ENCODE measurements at regions of chr16 and their contacts with region 1.

Region 1: DNA sequence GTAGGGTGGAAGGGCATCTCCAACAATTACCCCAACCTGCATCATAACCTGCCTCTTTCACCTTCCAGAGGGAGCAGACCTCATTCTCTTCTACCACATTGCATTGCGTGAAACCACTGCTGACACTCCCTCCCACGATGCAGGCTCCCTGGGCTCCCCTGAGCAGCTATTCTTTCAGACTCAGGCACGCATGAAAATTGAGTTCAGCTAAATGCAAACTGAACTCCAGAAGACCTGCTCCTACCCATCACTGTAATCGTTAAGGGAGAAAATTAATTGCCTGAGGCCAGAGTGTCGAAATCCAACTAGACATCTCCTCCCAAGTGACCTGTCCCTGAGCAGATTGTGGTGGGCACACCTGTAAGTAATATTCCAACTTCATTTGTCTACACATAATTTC is 186.0 kb downstream of the GRIN2A start:
- DNase-seq: no peak
- H3K4me3 ChIP-seq: no peak overlapping the region
- H3K27ac ChIP-seq: no peak overlapping the region
- H3K4me1 ChIP-seq: no peaks in the 10 kb centered on the region
- H3K27me3 ChIP-seq: no peaks in the 10 kb centered on the region
- CTCF ChIP-seq: no peak
- POLR2A ChIP-seq: no peak

Region 2: DNA sequence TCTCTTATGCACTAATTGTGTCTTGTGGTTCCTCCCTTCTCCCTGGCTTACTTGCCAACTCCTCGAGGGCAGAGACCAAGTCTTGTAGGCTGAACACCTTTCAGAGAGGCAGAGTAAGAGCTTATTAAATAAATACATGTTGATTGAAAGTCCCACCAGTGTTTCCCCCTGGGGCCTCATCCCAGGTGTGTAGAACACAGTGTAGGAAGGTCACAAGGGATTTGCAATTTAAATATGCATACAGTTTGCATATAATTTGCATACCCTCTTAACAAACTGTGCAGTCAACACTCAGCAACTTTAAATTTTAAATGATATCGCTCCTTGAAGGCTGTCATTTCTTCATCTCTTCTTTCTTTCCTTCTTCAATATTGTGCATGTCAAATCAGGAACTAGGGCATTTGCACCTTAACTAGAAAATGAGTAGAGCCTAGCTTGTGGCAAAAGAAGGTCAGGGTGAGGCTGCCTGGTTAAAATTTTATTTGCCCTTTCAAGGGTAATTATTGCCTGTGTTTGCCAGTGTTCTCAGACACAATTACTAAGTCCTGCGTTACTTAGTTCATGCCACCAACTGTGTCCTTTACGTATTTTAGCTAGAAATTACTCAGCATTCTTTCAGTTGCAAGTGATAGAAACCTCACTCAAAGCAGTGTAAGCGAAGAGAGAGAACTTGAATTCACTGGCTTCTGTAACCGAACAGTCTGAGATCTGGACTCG is 439.1 kb before region 1 on chr16:
- intact Hi-C with region 1: no loop called
- DNase-seq: no peak
- H3K4me3 ChIP-seq: no peak overlapping the region
- H3K27ac ChIP-seq: no peak overlapping the region
- H3K4me1 ChIP-seq: no peaks in the 10 kb centered on the region
- H3K27me3 ChIP-seq: no peaks in the 10 kb centered on the region
- CTCF ChIP-seq: no peak
- POLR2A ChIP-seq: no peak

Region 3: DNA sequence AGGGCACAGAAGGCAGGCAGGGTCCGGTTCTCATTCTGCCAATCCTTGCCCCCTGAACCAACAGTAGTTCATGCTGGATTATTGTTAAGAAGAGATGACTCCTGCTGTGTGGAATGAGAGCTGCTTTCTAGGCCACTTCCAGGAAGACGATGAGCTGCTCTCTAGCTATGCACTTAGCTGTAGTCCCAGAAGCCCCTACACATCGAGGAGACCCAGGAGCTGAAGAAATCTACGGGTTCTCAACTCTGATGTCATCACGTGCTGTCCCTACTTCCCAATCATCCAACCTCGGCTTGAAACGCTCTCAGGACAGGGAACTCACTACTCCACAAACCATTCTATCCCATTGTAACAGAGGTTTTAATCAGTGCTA is 613.2 kb after region 1 on chr16:
- intact Hi-C with region 1: loop called (anchors 5 kb)
- DNase-seq: no peak
- H3K4me3 ChIP-seq: no peak overlapping the region
- H3K27ac ChIP-seq: peak overlapping the region in 1 of 2 donors; percentile 32
- H3K4me1 ChIP-seq: no peaks in the 10 kb centered on the region
- H3K27me3 ChIP-seq: no peaks in the 10 kb centered on the region
- CTCF ChIP-seq: no peak
- POLR2A ChIP-seq: no peak

Measured in breast epithelium (tissue), 4 donors.